Uterus (tissue), 4 donors: ENCODE measurements at regions of chr2 and their contacts with region 1.

Region 1: GRCh38 chr2:20443276-20443920 is 3.5 kb upstream of the RHOB start:
- DNase-seq: peak; percentile 67 to 74
- H3K4me3 ChIP-seq: peak overlapping the region in 1 of 2 donors; percentile 15
- H3K27ac ChIP-seq: peak overlapping the region; percentile 88 to 92
- H3K4me1 ChIP-seq: no peaks in the 10 kb centered on the region
- H3K27me3 ChIP-seq: no peaks in the 10 kb centered on the region
- CTCF ChIP-seq: peak; percentile 53 to 68 (median 56)
- POLR2A ChIP-seq: no peak

Region 2: DNA sequence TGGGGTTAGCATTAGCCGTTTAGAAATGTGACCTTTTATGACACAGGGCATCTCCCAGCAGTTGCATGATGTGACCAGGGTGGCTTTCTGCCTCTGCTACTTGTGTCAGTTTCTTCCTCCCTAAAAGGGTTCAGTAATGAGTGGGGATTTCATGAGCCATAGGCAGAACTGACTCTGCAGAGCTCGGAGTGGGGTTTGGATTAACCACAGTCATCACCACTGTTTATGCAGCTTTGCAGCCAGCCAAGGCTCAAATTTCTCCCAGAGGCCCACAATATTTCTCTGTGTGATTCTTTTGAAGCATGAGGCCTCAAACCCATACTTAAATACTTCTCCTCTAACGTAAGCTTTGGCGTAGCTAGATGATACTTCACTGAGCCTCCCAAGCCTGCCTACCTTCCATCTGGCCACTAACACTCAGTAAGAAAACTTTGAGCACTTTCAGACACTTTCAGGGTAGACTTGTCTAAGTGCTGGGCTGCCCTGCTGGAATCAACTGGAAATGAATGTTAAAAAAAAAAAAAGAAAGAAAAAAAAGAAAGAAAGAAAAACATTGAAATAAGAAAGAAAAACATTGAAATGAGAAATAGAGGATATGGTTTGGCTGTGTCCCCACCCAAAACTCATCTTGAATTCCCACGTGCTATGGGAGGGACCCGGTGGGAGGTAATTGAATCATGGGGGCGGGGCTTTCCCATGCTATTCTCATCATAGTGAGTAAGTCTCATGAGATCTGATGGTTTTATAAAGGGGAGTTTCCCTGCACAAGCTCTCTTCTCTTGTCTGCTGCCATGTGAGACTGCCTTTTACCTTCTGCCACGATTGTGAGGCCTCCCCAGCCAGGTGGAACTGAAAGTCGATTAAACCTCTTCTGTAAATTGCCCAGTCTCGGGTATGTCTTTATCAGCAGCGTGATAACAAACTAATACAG is 380.5 kb before region 1 on chr2:
- intact Hi-C with region 1: no loop called
- DNase-seq: peak in 1 of 2 donors; percentile 52
- H3K4me3 ChIP-seq: no peak overlapping the region
- H3K27ac ChIP-seq: peak overlapping the region; percentile 19 to 50
- H3K4me1 ChIP-seq: no peaks in the 10 kb centered on the region
- H3K27me3 ChIP-seq: no peaks in the 10 kb centered on the region
- CTCF ChIP-seq: no peak
- POLR2A ChIP-seq: no peak

Region 3: DNA sequence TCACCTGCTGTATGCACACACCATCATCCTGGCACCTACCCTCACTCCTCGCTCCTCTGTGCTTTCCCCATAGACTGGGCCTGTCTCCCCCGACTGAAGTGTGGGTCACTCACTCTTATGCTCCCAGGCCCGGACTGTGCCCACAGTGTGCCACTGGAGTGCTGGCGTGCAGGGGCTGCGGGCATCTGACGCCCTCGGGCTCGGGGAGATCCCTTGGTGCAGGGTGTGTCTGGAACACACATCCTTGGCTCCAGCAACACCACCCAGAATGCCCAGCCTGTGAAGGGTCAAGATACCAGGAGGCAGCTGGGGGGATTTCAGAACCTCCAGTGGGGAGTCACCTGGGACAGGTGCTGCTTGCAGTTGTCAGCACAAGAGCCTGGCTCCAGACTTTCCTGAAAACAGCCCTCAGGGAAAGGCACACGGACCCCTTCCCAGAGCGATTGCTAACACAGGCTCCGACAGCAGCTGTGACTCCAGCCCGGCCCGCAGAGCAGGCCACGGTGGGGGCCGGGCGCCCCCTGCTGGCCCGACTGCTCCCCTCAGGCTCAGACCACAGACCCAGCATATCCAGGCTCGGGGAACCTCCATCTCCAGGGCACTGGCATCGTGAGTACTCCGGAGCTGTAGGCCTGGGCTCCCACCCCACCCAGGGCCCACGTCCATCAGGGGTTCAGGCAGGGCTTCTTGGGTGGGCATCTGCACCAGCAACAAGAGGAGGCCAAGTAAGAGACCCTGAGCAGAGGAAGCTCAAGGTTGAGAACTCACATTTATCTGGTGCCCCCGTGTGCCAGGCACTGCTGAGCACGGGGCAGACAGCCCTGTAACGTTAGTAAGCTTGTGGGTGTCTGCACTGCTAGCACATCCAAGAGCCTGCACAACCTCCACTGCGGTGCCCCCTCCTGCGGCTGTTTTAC is 198.9 kb after region 1 on chr2:
- intact Hi-C with region 1: loop called (anchors 5 kb)
- DNase-seq: peak; percentile 81 to 85
- H3K4me3 ChIP-seq: no peak overlapping the region
- H3K27ac ChIP-seq: peak overlapping the region; percentile 33 to 76
- H3K4me1 ChIP-seq: peaks cover 0 to 9% of the 10 kb centered on the region in 2 donors
- H3K27me3 ChIP-seq: no peaks in the 10 kb centered on the region
- CTCF ChIP-seq: peak; percentile 92 to 98 (median 98)
- POLR2A ChIP-seq: no peak